ENCODE measurements at regions of chr2 and their contacts with region 1.

Region 1: DNA sequence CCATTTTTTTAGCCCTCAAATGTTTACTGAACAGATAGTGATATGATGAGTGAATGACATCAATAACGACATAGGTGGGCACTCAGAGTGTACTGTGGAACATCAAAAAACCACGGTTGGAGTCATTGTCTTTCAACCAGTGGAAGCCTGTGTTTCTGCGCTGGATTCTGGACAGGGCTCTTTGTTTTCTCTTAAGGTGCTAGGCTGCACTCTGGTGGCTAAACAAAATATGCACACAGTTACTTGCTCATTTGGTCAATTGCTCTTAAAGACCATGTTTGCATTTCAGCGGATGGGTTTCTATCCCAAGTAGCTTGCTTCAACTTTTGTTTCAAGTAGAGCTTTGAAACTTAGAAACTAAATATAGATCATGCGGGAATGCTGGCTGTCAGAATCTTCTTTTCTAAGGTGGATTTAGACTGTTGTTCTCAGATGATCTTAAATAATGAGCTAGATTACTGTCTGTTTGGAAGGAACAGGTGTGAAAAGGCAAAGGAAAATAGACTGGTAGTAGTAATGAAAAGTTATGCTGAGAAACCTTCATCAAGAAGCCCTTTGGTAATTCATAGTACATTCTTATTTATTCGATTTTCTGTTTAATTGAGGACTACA is 48.5 kb upstream of the LYPD6B start:
- DNase-seq: no peak
- H3K4me3 ChIP-seq: no peak overlapping the region
- H3K27ac ChIP-seq: no peak overlapping the region
- H3K4me1 ChIP-seq: no peaks in the 10 kb centered on the region
- H3K27me3 ChIP-seq: peaks cover 10% of the 10 kb centered on the region
- CTCF ChIP-seq: peak; percentile 85

Region 2: DNA sequence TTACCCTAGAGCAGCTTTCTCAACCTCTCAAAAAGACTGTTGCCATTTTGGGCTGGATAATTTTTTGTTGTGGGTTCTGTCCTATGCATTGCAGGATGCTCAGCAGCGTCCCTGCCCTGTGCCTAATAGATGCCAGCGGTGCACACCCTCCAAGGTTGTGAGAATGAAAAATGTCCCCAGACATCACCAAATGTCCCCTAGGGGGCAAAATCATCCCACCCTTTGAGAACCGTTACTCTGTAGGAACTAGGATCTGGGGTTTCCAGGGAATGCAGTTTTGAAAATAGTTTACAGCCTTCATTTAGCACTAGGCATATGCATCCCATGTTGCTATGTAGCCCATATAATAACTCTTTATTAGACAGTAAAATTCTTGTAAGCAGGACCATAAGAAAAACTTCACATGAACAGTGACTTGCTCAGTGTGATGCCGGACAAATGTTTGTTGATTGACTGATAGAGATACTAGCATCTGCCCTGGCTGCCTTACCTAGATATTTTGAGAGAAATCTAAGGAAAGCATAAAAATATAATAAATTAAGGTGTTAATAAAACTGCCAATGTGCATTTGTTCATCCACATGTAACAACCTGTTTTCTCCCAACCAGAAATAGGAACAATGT is 424.6 kb before region 1 on chr2:
- intact Hi-C with region 1: loop called (anchors 10 kb)
- DNase-seq: no peak
- H3K4me3 ChIP-seq: no peak overlapping the region
- H3K27ac ChIP-seq: no peak overlapping the region
- H3K4me1 ChIP-seq: no peaks in the 10 kb centered on the region
- H3K27me3 ChIP-seq: peaks cover 23% of the 10 kb centered on the region
- CTCF ChIP-seq: peak; percentile 55